Right ventricle myocardium inferior (tissue), 1 donor: ENCODE measurements at regions of chr9 and their contacts with region 1.

Region 1: GRCh38 chr9:95127249-95128176 is 190.0 kb downstream of the FANCC start:
- DNase-seq: peak; percentile 92
- ATAC-seq: peak; percentile 94

Region 2: DNA sequence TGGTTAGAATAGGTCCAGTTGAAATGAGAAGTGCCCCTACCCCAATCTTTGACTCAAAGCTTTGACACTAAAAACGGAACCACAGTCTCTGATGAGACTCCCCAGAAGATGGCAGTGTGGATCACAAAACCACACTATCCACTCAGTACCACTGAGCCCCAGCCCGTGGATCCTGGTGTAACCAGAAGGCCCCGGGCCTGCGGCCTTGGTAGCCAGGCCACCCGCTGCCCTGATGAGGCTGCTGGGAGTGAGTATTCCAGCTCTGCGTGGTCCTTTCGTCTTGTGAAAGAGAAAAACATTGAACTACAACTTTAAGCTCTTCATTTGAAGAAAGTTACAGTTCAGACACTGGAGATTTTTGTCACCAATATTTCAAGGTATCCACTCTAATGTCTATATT is 446.0 kb before region 1 on chr9:
- intact Hi-C with region 1: loop called (anchors 2 kb)
- DNase-seq: peak; percentile 83
- ATAC-seq: peak; percentile 97

Region 3: DNA sequence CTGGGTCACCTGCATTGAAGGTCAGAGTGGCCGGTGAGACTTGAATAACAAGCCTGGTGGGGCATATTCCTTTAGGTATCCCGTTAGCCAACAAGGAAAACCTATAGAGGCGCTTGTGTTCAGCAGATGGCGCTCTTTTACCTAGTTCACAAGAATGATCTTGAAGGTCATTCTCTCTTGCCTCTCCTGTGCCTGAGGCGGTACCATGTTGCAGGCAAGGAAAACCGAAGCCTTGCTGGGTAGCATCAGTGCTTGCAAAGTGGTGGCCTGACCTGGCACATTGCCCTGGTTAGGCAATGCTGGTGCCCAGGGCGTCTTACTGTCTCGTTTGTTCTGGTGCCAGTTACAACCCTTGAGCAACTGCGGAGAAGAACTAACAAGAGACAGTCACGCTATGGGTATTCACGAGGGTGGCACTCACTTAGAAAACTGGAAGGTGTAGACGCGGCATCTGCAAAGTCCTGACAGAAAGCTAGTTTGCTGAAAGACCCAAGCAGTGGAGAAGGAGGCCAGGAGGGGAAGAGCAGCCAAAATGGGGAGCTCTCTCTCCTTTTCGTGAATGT is 344.3 kb before region 1 on chr9:
- intact Hi-C with region 1: loop called (anchors 1 kb)
- DNase-seq: no peak
- ATAC-seq: peak; percentile 79

Region 4: GRCh38 chr9:95048225-95049087 is 79.1 kb before region 1 on chr9:
- intact Hi-C with region 1: loop called (anchors 5 kb)
- DNase-seq: peak; percentile 89
- ATAC-seq: peak; percentile 80

Region 5: GRCh38 chr9:95181226-95181818 is 53.8 kb after region 1 on chr9:
- intact Hi-C with region 1: loop called (anchors 10 kb)
- DNase-seq: no peak
- ATAC-seq: no peak